ENCODE measurements at regions of chr9 and their contacts with region 1.

Region 1: GRCh38 chr9:72038890-72039410 is 21.5 kb downstream of the C9orf57 start:
- DNase-seq: peak; percentile 72
- H3K4me3 Mint-ChIP-seq: no peak overlapping the region
- H3K27ac Mint-ChIP-seq: peak overlapping the region; percentile 72
- H3K4me1 Mint-ChIP-seq: peaks cover 34% of the 10 kb centered on the region
- H3K27me3 Mint-ChIP-seq: no peaks in the 10 kb centered on the region
- CTCF ChIP-seq: peak; percentile 87

Region 2: GRCh38 chr9:71984403-71984802 is 54.5 kb before region 1 on chr9:
- CTCF ChIA-PET with region 1: interaction called, 11 read pairs
- intact Hi-C with region 1: no loop called
- DNase-seq: no peak
- H3K4me3 Mint-ChIP-seq: no peak overlapping the region
- H3K27ac Mint-ChIP-seq: no peak overlapping the region
- H3K4me1 Mint-ChIP-seq: peaks cover 14% of the 10 kb centered on the region
- H3K27me3 Mint-ChIP-seq: no peaks in the 10 kb centered on the region
- CTCF ChIP-seq: no peak

Region 3: GRCh38 chr9:72149231-72149975 is 110.5 kb after region 1 on chr9 and contains the start of gene GDA:
- CTCF ChIA-PET with region 1: interaction called, 4 read pairs
- intact Hi-C with region 1: loop called (anchors 2 kb)
- DNase-seq: peak; percentile 66
- H3K4me3 Mint-ChIP-seq: peak within 1 kb of the TSS; percentile 84
- H3K27ac Mint-ChIP-seq: peak within 1 kb of the TSS; percentile 87
- H3K4me1 Mint-ChIP-seq: peaks cover 23% of the 10 kb centered on the region
- H3K27me3 Mint-ChIP-seq: no peaks in the 10 kb centered on the region
- CTCF ChIP-seq: no peak
- total RNA-seq, gene GDA: 21.0 and 24.3 TPM in 2 replicates

Region 4: GRCh38 chr9:72203205-72203803 is 164.4 kb after region 1 on chr9:
- CTCF ChIA-PET with region 1: interaction called, 3 read pairs
- intact Hi-C with region 1: loop called (anchors 5 kb)
- DNase-seq: peak; percentile 34
- H3K4me3 Mint-ChIP-seq: no peak overlapping the region
- H3K27ac Mint-ChIP-seq: no peak overlapping the region
- H3K4me1 Mint-ChIP-seq: peaks cover 10% of the 10 kb centered on the region
- H3K27me3 Mint-ChIP-seq: no peaks in the 10 kb centered on the region
- CTCF ChIP-seq: peak; percentile 61

Region 5: DNA sequence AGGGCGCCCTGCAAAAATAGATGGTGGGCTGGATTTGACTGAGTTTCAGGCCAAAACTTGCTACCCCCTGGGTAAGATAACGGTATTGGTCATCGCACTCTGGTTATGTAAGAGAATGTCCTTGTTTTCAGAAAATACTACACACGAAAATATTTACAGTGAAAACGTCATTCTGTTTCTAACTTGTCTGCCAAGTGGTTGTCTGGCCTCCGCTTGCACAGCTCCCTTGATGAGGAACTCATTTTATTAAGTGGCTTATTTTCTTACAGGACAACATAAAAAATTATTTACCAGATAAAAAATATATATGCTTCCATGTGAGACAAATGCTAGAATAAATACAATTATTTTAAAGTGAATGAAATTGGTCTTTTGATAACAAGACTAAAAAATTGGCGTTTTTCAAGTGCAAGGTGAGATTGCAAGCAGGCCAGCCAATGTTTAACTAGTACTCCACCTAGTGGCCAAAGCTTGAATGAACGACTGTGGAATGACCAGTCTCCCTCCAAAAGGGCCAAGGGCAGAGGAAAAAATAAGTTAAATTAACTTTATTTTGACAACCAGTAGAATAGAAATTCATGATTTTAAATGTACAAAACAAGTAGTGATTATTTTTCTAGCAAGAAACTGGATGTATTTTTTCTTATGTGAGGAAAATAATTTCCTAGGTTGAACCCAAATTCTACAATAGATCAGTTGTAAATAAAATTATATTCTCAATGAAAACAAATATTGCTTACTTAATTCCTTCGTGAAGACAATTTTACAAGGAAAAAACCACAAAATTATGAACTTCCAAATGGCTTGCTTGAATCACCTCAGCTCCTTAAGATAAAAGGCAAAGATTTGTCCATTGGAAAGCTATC is 232.9 kb after region 1 on chr9:
- CTCF ChIA-PET with region 1: interaction called, 14 read pairs
- intact Hi-C with region 1: loop called (anchors 1 kb)
- DNase-seq: peak; percentile 51
- H3K4me3 Mint-ChIP-seq: no peak overlapping the region
- H3K27ac Mint-ChIP-seq: no peak overlapping the region
- H3K4me1 Mint-ChIP-seq: no peaks in the 10 kb centered on the region
- H3K27me3 Mint-ChIP-seq: no peaks in the 10 kb centered on the region
- CTCF ChIP-seq: peak; percentile 41

Region 6: GRCh38 chr9:72827950-72828731 is 789.2 kb after region 1 on chr9:
- CTCF ChIA-PET with region 1: no interaction called
- intact Hi-C with region 1: loop called (anchors 5 kb)
- DNase-seq: peak; percentile 33
- H3K4me3 Mint-ChIP-seq: no peak overlapping the region
- H3K27ac Mint-ChIP-seq: peak overlapping the region; percentile 93
- H3K4me1 Mint-ChIP-seq: peaks cover 31% of the 10 kb centered on the region
- H3K27me3 Mint-ChIP-seq: no peaks in the 10 kb centered on the region
- CTCF ChIP-seq: no peak

Measured in Calu3 (cell line).